ENCODE measurements at regions of chr1 and their contacts with region 1.

Region 1: GRCh38 chr1:204544321-204544720 is 28.1 kb downstream of the MDM4 start:
- DNase-seq: peak; percentile 70
- H3K4me3 Mint-ChIP-seq: no peak overlapping the region
- H3K27ac Mint-ChIP-seq: peak overlapping the region; percentile 21
- H3K4me1 Mint-ChIP-seq: peaks cover 24% of the 10 kb centered on the region
- H3K27me3 Mint-ChIP-seq: no peaks in the 10 kb centered on the region
- CTCF ChIP-seq: no peak

Region 2: GRCh38 chr1:204296431-204296988 is 247.8 kb before region 1 on chr1:
- CTCF ChIA-PET with region 1: no interaction called
- POLR2A ChIA-PET with region 1: no interaction called
- intact Hi-C with region 1: no loop called
- DNase-seq: peak; percentile 62
- H3K4me3 Mint-ChIP-seq: peak overlapping the region; percentile 40
- H3K27ac Mint-ChIP-seq: peak overlapping the region; percentile 62
- H3K4me1 Mint-ChIP-seq: peaks cover 67% of the 10 kb centered on the region
- H3K27me3 Mint-ChIP-seq: no peaks in the 10 kb centered on the region
- CTCF ChIP-seq: no peak

Region 3: DNA sequence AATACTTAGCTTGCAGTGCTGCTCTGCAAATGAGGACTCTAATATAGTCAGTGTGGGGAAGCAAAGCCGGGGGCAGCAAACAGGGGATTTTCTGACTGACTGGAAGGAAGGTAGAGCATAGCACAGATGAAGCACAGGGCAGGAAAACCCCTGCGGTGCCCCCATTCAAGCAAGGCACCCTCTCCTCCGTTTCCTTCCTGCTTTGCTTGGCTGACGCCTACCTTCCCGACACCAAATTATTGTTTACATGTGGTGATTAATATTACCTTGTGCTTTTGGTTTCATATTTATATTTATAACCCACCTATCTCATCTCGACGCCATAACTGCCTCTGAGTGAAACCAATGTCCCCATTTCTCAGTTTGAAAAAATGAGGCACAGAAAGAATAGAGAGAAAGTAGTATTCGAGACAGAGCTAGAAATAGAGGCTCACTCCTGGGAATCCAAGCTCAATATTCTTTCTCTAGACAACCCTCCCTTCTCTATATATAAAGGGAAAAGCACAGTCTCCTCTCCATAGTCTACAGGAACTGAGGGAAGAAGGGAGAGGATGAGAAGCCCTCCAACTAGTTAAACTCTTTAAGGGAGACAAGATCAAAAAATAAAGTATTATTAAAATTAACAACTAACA is 91.1 kb before region 1 on chr1:
- CTCF ChIA-PET with region 1: no interaction called
- POLR2A ChIA-PET with region 1: no interaction called
- intact Hi-C with region 1: no loop called
- DNase-seq: no peak
- H3K4me3 Mint-ChIP-seq: no peak overlapping the region
- H3K27ac Mint-ChIP-seq: no peak overlapping the region
- H3K4me1 Mint-ChIP-seq: peaks cover 21% of the 10 kb centered on the region
- H3K27me3 Mint-ChIP-seq: no peaks in the 10 kb centered on the region
- CTCF ChIP-seq: no peak

Region 4: DNA sequence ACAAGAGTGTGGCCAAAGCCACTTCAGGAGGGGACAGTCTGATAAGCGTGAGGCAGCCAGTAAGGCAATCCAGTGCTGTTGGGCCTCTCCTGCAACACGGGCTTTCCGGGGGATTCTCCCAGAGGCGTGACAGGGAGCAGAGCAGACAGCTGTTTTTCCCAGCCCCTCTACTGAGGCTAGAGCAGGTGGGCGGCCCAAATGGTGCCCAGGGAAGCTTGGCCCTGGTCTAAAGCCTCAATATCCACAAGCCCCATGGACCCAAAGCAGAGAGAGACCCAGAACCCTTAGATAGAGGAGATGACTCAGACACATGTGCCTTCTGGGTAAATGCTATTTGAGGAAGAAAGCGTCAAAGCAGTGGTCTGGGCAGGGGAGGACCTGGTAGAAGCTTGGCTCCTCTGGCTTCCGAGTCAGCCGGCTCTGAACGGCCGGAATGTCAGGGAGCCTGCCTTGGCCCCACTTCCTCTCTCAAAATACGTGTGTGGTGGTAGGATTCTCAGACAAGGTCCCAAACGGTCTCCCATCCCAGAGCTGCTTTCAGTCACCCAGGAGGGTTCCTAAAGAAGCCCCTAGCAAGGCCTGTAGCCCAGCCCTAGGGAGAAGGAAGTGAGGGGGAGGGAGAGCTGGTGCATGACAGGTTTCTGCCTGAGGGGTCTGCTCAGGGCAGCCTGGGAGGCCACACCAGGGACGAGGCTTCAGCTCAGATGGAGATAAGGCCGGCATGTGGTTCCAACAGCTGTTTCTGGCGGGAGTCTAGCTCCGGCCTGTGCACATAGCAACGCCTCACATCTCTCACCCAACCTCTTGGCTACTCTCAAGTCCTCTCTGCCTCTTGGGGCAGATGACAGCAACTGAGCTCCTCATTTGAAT is 78.5 kb before region 1 on chr1:
- CTCF ChIA-PET with region 1: no interaction called
- POLR2A ChIA-PET with region 1: no interaction called
- intact Hi-C with region 1: no loop called
- DNase-seq: no peak
- H3K4me3 Mint-ChIP-seq: no peak overlapping the region
- H3K27ac Mint-ChIP-seq: no peak overlapping the region
- H3K4me1 Mint-ChIP-seq: no peaks in the 10 kb centered on the region
- H3K27me3 Mint-ChIP-seq: no peaks in the 10 kb centered on the region
- CTCF ChIP-seq: no peak

Region 5: GRCh38 chr1:204523605-204524215 is 20.6 kb before region 1 on chr1:
- CTCF ChIA-PET with region 1: interaction called, 5 read pairs
- POLR2A ChIA-PET with region 1: interaction called, 18 read pairs
- intact Hi-C with region 1: no loop called
- DNase-seq: peak; percentile 50
- H3K4me3 Mint-ChIP-seq: peak overlapping the region; percentile 1
- H3K27ac Mint-ChIP-seq: peak overlapping the region; percentile 44
- H3K4me1 Mint-ChIP-seq: peaks cover 33% of the 10 kb centered on the region
- H3K27me3 Mint-ChIP-seq: no peaks in the 10 kb centered on the region
- CTCF ChIP-seq: no peak

Region 6: DNA sequence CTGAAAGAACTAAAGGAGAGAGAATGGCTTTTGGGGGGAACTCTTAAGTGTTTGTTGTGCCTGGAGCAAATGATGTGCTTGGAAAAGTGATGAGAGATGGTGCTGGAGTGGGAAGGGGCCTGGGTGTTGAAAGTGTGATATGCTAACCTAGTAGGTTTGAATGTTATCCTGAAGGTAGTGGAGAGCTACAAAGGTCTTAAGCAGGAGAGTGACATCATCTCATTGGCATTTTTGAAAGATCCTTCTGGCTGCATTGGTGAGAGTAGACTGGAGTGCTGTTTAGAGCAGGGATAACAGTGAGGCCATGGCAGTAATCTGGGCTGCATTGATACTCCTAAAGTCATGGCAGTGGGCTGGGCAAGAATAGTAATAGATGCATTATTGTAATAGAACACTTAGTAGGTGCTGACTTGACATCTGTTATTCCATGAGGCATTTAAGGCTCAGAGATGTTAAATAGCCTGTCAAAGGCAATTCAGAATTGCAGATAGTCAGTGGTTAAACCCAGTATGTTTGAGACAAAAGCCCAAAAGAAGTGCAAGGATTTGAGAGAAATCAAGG is 16.3 kb after region 1 on chr1:
- CTCF ChIA-PET with region 1: interaction called, 8 read pairs
- POLR2A ChIA-PET with region 1: interaction called, 12 read pairs
- intact Hi-C with region 1: no loop called
- DNase-seq: no peak
- H3K4me3 Mint-ChIP-seq: no peak overlapping the region
- H3K27ac Mint-ChIP-seq: no peak overlapping the region
- H3K4me1 Mint-ChIP-seq: peaks cover 8% of the 10 kb centered on the region
- H3K27me3 Mint-ChIP-seq: no peaks in the 10 kb centered on the region
- CTCF ChIP-seq: no peak

Region 7: DNA sequence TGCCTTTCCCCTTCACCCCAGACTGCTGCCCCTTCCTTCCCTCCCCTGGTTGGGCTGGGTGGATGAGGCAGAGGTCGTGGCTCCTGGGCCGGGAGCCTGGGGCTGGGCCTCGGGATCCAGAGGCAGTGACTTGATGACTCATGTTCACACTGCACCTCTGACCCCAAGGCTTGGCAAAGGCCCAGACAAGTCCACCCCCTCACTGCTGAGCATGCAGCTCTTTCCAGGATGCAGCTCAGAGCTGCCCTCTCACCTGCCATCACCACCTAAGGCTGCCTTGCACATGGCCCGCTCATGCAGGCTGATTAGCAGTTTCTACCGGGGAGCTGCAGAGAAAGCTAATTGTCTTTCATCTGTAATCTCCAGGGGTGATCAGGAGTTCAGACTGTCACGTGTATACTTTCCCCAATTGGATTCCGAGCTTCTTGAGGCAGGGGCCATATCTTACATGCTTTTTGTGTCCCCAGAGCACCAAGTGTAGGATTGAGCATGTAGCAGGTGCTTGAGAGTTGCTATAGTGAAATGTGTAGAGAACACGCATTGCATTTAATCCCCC is 79.1 kb after region 1 on chr1:
- CTCF ChIA-PET with region 1: no interaction called
- POLR2A ChIA-PET with region 1: no interaction called
- intact Hi-C with region 1: no loop called
- DNase-seq: peak; percentile 83
- H3K4me3 Mint-ChIP-seq: no peak overlapping the region
- H3K27ac Mint-ChIP-seq: no peak overlapping the region
- H3K4me1 Mint-ChIP-seq: no peaks in the 10 kb centered on the region
- H3K27me3 Mint-ChIP-seq: peaks cover 29% of the 10 kb centered on the region
- CTCF ChIP-seq: no peak

Measured in MCF 10A (cell line).